ENCODE measurements at regions of chr6 and their contacts with region 1.

Region 1: GRCh38 chr6:150079604-150080003 is 10.7 kb upstream of the ULBP3 start:
- DNase-seq: peak; percentile 10
- ATAC-seq: no peak
- H3K4me3 ChIP-seq: no peak overlapping the region
- H3K27ac ChIP-seq: no peak overlapping the region
- H3K4me1 ChIP-seq: peaks cover 18% of the 10 kb centered on the region
- H3K27me3 ChIP-seq: no peaks in the 10 kb centered on the region
- CTCF ChIP-seq: no peak

Region 2: GRCh38 chr6:150392452-150393220 is 313.0 kb after region 1 on chr6:
- CTCF ChIA-PET with region 1: interaction called, 3 read pairs
- POLR2A ChIA-PET with region 1: no interaction called
- intact Hi-C with region 1: loop called (anchors 5 kb)
- DNase-seq: peak; percentile 59
- ATAC-seq: peak; percentile 55
- H3K4me3 ChIP-seq: no peak overlapping the region
- H3K27ac ChIP-seq: peak overlapping the region; percentile 58
- H3K4me1 ChIP-seq: peaks cover 14% of the 10 kb centered on the region
- H3K27me3 ChIP-seq: no peaks in the 10 kb centered on the region
- CTCF ChIP-seq: no peak

Region 3: GRCh38 chr6:150579611-150580010 is 500.0 kb after region 1 on chr6:
- CTCF ChIA-PET with region 1: no interaction called
- POLR2A ChIA-PET with region 1: no interaction called
- intact Hi-C with region 1: loop called (anchors 10 kb)
- DNase-seq: no peak
- ATAC-seq: no peak
- H3K4me3 ChIP-seq: no peak overlapping the region
- H3K27ac ChIP-seq: no peak overlapping the region
- H3K4me1 ChIP-seq: peaks cover 11% of the 10 kb centered on the region; the same call in 1 of the 2 replicates
- H3K27me3 ChIP-seq: no peaks in the 10 kb centered on the region
- CTCF ChIP-seq: no peak